Heart left ventricle (tissue), 16 donors: ENCODE measurements at regions of chr12 and their contacts with region 1.

Region 1: DNA sequence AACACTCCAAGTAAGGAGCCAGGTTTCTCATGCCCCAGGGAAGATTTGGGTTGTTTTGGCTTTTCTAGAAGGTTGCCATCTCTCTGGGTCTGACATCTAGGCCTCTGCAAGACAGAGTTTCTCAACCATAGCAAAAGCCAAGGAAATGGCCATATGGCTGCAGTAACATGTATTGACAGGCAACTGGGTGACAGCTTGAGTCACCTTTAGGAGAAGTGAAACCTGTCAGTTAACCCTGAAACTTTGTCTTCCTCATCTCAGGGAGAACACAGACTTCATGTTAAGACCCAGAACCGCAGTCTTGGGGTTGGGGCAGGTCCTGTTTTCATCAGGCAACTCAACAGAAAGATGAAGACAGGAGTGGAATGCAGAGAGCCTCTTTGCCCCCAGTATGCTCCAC is 46.0 kb upstream of the PLBD1 start:
- DNase-seq: no peak
- ATAC-seq: no peak
- H3K4me3 ChIP-seq: no peak overlapping the region
- H3K27ac ChIP-seq: peak overlapping the region in 9 of 12 donors; percentile 13 to 78 (median 52)
- H3K4me1 ChIP-seq: peaks cover 0 to 29% (median 18%) of the 10 kb centered on the region in 12 donors
- H3K27me3 ChIP-seq: no peaks in the 10 kb centered on the region
- CTCF ChIP-seq: no peak
- POLR2A ChIP-seq: no peak

Region 2: DNA sequence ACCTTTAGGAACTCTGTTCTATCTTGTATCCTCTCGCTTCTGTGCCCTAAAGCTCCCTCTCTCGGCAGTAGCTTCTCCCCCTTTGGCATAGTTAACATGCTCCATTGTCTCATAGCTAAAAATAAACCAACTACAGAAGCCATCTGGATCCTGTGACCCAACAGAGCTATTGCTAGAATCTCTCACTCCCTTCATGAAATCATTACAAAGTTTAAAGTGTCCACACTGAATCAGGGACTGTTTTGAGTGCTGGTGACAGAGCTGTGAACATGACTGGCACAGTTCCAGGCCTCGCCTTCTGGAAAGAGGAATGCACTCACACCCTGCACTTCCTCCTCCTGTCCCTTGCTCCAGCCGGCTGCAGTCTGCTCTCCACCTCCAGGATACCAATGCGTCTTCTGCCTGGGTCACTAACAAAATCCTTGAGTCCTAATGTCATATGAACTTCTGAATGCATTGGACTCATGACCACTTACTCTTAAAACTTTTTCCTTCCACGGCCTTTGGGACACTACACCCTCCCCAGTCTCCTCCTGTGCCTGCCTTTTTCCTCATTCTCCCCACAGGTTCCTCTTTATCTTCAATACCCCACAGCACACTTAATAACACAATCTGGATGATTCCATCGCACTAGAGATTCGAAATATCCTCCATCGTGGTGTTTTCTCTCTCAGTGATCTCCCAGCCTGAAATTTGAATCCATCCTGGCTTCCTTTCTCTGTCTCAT is 59.3 kb before region 1 on chr12:
- intact Hi-C with region 1: loop called in 2 of 10 experiments (anchors 5 kb)
- DNase-seq: peak; percentile 88 to 96 (median 90)
- ATAC-seq: peak; percentile 94 to 98 (median 96)
- H3K4me3 ChIP-seq: peak overlapping the region in 10 of 12 donors; percentile 5 to 45 (median 25)
- H3K27ac ChIP-seq: peak overlapping the region; percentile 64 to 93 (median 84)
- H3K4me1 ChIP-seq: peaks cover 0 to 41% (median 22%) of the 10 kb centered on the region in 12 donors
- H3K27me3 ChIP-seq: no peaks in the 10 kb centered on the region
- CTCF ChIP-seq: peak in 8 of 12 donors; percentile 15 to 59 (median 36)
- POLR2A ChIP-seq: no peak

Region 3: DNA sequence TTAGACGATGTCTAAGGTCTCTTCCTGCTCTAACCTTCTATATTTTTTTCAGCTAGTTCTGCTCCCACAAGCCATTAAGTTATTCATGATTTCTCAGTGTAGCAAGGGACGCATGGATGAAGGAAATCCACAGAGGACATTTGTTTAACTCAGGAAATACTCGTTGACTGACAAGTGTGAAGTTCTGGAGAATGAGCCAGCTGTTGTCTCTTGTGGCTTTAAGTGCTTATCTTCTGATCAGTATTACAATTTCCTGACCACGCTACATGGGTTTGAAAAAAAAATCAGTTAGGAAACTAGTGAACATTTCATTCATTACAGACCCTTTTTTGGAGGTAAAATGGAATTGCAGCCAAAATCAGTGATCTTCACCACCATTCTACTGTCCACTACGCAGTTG is 29.5 kb after region 1 on chr12:
- intact Hi-C with region 1: no loop called
- DNase-seq: no peak
- ATAC-seq: no peak
- H3K4me3 ChIP-seq: no peak overlapping the region
- H3K27ac ChIP-seq: peak overlapping the region in 1 of 12 donors; percentile 27
- H3K4me1 ChIP-seq: peaks cover 0 to 25% (median 2%) of the 10 kb centered on the region in 12 donors
- H3K27me3 ChIP-seq: no peaks in the 10 kb centered on the region
- CTCF ChIP-seq: no peak
- POLR2A ChIP-seq: no peak